ENCODE measurements at regions of chr9 and their contacts with region 1.

Region 1: GRCh38 chr9:129177791-129178559 is at the start of gene IER5L:
- DNase-seq: peak; percentile 89 to 97 (median 94)
- ATAC-seq: peak; percentile 84 to 88
- H3K4me3 Mint-ChIP-seq: peak within 1 kb of the TSS; percentile 88 to 96 (median 93)
- H3K27ac Mint-ChIP-seq: peak within 1 kb of the TSS in 9 of 10 donors; percentile 51 to 87 (median 82)
- H3K4me1 Mint-ChIP-seq: peaks cover 3 to 16% (median 8%) of the 10 kb centered on the region in 4 donors
- H3K27me3 Mint-ChIP-seq: peaks cover 0 to 3% (median 0%) of the 10 kb centered on the region in 5 donors
- polyA plus RNA-seq, gene IER5L: 0.05 to 0.49 TPM in 2 of 3 donors, not detected in the other

Region 2: DNA sequence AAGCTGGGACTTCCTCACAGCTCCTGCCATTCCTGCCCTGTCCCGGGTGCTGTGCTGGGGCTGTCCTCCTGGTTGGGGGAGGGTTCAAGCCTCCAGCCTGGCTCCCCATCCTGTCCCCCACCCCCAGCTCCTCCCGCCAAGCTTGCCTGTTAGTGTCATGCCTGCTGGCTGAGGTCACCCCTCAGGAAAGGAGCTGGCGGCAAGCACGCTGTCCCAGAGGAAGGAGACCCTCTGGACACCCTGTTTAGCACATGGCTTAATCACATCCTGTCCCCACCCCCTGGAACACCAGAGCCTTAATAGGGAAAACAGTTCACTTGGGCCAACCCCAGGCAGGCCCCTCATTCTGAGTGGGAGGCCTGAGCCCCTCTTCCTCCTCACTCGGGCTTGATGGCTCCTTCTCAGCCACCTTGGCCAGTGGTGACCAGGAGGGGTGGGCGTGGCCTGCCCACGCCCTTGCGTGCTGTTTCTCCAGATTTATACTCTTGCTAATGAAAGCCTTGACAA is 266.4 kb before region 1 on chr9:
- POLR2A ChIA-PET with region 1: no interaction called
- DNase-seq: no peak
- ATAC-seq: no peak
- H3K4me3 Mint-ChIP-seq: peak overlapping the region in 4 of 10 donors; percentile 31 to 80 (median 56)
- H3K27ac Mint-ChIP-seq: peak overlapping the region in 8 of 10 donors; percentile 37 to 89 (median 67)
- H3K4me1 Mint-ChIP-seq: peaks cover 26 to 63% (median 42%) of the 10 kb centered on the region in 4 donors
- H3K27me3 Mint-ChIP-seq: no peaks in the 10 kb centered on the region

Region 3: DNA sequence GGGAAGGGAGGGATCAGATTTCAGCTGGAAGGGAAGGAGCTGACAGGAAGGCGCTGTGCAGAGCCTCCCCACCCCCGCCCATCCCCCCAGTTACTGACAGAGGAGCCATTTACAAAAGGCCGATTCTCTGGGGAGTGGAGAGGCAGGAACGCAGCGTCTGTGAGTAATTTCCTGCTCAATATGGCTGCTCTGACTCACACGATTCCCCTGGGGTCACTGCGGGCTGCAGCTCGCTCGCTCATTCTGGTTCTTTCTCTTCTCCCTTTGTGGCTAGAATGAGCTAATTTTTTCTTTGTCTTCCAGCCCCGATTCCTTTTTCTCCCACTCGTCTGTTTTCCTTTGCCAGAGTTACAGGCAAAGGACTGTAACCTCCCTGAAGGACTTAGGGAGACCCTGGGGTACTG is 38.0 kb before region 1 on chr9:
- POLR2A ChIA-PET with region 1: interaction called, 38 read pairs
- DNase-seq: peak; percentile 51 to 88 (median 66)
- ATAC-seq: peak; percentile 86
- H3K4me3 Mint-ChIP-seq: peak overlapping the region; percentile 83 to 96 (median 92)
- H3K27ac Mint-ChIP-seq: peak overlapping the region; percentile 92 to 99 (median 98)
- H3K4me1 Mint-ChIP-seq: peaks cover 16 to 43% (median 34%) of the 10 kb centered on the region in 4 donors
- H3K27me3 Mint-ChIP-seq: no peaks in the 10 kb centered on the region

Region 4: DNA sequence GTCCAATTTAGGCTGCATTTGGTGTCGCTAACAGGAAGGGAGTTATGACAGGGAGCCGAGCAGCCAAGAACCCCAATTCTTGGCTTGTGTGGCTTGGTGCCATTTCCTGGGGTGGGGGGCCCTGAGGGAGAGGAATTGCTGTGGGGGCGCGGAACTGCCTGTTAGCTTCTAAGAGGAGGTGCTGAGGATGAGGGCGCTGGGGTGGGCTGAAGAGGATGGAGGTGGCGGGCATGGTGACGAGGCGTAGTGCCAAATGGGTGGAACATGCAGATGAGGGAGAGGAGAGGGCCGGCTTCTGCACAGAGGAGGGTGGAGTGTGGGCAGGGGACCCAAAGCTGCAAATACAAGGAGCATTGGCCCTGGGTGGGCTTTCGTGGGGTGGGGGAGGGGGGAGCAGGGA is 27.9 kb before region 1 on chr9:
- POLR2A ChIA-PET with region 1: no interaction called
- DNase-seq: no peak
- ATAC-seq: no peak
- H3K4me3 Mint-ChIP-seq: no peak overlapping the region
- H3K27ac Mint-ChIP-seq: peak overlapping the region in 3 of 10 donors; percentile 47 to 69 (median 59)
- H3K4me1 Mint-ChIP-seq: peaks cover 0 to 16% (median 5%) of the 10 kb centered on the region in 4 donors
- H3K27me3 Mint-ChIP-seq: no peaks in the 10 kb centered on the region

Region 5: GRCh38 chr9:129225815-129226214 is 47.8 kb after region 1 on chr9:
- POLR2A ChIA-PET with region 1: interaction called, 21 read pairs
- DNase-seq: peak in 9 of 10 donors; percentile 32 to 73 (median 49)
- ATAC-seq: peak; percentile 82 to 85
- H3K4me3 Mint-ChIP-seq: peak overlapping the region in 9 of 10 donors; percentile 36 to 80 (median 60)
- H3K27ac Mint-ChIP-seq: peak overlapping the region; percentile 56 to 98 (median 83)
- H3K4me1 Mint-ChIP-seq: peaks cover 26 to 60% (median 49%) of the 10 kb centered on the region in 4 donors
- H3K27me3 Mint-ChIP-seq: no peaks in the 10 kb centered on the region

Region 6: DNA sequence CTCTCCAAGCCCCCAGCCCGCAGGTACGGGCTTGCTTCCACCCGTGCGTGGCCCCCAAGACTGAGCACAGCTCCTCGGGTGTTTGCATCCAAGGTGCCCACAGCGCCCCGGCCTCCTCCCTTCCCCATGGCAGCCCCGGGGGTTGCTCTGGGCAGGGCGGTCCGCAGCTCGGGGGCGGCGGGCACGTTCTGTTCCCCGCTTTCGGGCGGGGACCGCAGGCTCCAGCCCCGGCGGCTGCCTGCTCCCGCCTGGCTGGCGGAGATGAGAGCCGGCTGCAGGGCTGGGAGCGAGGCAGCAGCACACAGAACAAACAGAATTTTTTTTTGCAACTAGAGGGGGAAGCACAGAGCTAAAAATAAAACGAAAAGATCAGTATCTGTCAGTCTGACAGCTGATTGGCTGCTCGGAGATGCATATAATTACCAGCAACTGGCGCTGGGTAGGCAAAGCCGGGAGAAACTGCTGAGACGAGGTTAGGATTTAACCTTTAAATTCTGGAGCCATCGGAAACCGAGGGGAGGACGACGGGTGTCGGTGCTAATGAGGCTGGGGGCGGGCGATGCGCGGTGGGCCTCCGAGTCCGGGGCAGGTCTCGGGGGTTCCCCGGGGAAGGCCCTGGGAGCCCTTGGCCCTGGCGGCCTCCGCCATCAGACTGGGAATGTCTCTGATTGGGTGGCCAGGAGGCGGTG is 142.7 kb after region 1 on chr9:
- POLR2A ChIA-PET with region 1: interaction called, 47 read pairs
- DNase-seq: peak in 9 of 10 donors; percentile 47 to 79 (median 67)
- ATAC-seq: peak; percentile 93 to 97
- H3K4me3 Mint-ChIP-seq: peak overlapping the region; percentile 74 to 94 (median 89)
- H3K27ac Mint-ChIP-seq: peak overlapping the region; percentile 59 to 96 (median 90)
- H3K4me1 Mint-ChIP-seq: peaks cover 10 to 26% (median 17%) of the 10 kb centered on the region in 4 donors
- H3K27me3 Mint-ChIP-seq: peaks cover 0 to 3% (median 0%) of the 10 kb centered on the region in 5 donors

Region 7: DNA sequence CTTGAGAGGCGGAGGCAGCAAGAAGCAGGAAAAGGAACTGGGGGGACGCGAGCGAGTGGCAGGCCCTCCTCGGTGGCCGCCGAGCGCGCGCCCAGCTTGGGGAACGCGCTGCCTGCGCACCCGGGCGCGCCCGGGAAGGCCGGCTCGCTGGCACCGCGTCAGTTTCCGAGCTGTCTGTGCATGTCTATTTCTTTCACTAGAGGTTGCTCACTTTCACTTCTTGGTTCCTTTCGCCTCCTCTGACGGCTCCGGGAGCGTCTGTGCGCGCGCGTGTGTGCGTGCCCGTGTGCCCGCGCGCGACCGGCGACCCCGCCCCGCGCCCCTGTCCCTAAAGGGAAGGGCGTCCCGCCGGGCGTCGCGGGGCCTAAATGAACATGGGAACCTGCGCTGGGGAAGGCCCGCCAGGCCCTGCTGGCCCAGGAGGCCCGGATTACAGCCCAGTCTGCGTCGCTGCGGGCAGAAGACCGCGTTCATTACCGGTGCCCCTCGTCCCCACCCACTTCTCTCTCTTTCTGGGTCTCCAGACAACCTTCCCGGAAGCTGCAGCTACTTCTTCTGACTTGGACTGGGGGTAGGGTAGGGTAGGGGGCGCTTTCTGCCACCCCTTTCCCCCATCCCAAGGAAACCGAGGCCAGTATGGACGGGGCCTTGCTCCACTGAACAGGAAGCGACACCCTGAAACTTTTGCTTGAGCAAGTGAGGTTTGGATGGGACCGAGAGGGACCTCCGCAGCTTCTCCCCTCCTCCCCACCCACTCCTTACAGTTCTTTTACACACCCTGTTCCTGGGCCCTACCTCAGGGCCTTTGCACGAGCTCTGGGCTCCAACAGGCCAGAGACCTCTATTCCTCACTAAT is 205.8 kb after region 1 on chr9:
- POLR2A ChIA-PET with region 1: interaction called, 28 read pairs
- DNase-seq: peak; percentile 67 to 89 (median 78)
- ATAC-seq: peak; percentile 89 to 91
- H3K4me3 Mint-ChIP-seq: peak overlapping the region; percentile 76 to 89 (median 82)
- H3K27ac Mint-ChIP-seq: peak overlapping the region; percentile 90 to 99 (median 97)
- H3K4me1 Mint-ChIP-seq: peaks cover 9 to 23% (median 17%) of the 10 kb centered on the region in 4 donors
- H3K27me3 Mint-ChIP-seq: no peaks in the 10 kb centered on the region

Region 8: DNA sequence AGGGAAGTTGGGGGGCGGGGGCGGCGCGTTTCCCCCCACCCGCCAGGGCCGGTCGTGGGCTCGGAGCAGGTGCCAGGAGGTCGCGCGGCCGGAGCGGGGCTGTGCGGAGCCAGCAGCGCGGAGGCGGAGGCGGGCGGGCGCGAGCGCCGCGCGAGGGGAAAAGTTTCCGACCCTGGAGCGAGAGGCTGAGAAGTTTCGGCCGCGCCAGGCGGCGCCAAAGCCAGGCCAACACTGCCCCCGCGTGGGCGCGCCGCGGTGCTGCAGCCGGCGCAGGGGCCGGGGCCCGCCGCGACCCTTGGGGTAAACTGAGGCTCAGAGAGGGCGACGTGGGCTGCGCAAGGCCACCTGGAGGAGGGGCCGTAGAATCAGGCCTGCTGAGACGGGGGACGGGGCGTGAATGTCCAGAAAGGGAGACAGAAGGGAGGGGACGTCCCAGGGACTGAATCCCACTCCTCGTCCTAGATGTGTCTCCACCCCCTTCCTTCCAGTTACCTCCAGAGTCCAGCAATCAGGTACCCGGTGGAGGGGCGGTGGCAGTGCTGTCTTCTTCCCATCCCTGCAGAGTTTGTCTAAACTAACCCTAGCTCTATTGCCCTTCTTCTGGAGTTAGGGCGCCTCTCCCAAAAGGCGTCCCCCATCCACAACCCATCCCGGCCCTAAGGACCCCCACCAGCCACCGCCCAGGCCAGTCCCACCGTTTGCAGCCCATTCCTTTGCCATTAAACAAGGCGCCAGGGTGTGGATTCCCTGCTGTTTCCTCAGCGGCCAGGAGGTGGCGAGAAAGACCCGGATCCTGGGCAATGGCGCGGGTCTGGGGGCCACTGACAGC is 432.7 kb after region 1 on chr9:
- POLR2A ChIA-PET with region 1: interaction called, 28 read pairs
- DNase-seq: peak; percentile 59 to 82 (median 72)
- ATAC-seq: peak; percentile 73
- H3K4me3 Mint-ChIP-seq: peak overlapping the region; percentile 75 to 91 (median 80)
- H3K27ac Mint-ChIP-seq: peak overlapping the region in 8 of 10 donors; percentile 14 to 91 (median 68)
- H3K4me1 Mint-ChIP-seq: peaks cover 10 to 44% (median 38%) of the 10 kb centered on the region in 4 donors
- H3K27me3 Mint-ChIP-seq: peaks cover 0 to 1% (median 0%) of the 10 kb centered on the region in 5 donors

Measured in naive thymus-derived CD8-positive, alpha-beta T cell (primary cell).